ENCODE measurements at regions of chr2 and their contacts with region 1.

Region 1: GRCh38 chr2:237441605-237442274 is 27.8 kb upstream of the COL6A3 start:
- DNase-seq: peak; percentile 60
- H3K4me3 Mint-ChIP-seq: peak overlapping the region; percentile 1
- H3K27ac Mint-ChIP-seq: peak overlapping the region; percentile 81
- H3K4me1 Mint-ChIP-seq: peaks cover 57% of the 10 kb centered on the region
- H3K27me3 Mint-ChIP-seq: no peaks in the 10 kb centered on the region

Region 2: GRCh38 chr2:237408335-237409000 is 33.3 kb before region 1 on chr2:
- CTCF ChIA-PET with region 1: no interaction called
- intact Hi-C with region 1: no loop called
- DNase-seq: no peak
- H3K4me3 Mint-ChIP-seq: no peak overlapping the region
- H3K27ac Mint-ChIP-seq: no peak overlapping the region
- H3K4me1 Mint-ChIP-seq: no peaks in the 10 kb centered on the region
- H3K27me3 Mint-ChIP-seq: no peaks in the 10 kb centered on the region

Region 3: GRCh38 chr2:237421542-237422116 is 20.1 kb before region 1 on chr2:
- CTCF ChIA-PET with region 1: interaction called, 23 read pairs
- intact Hi-C with region 1: no loop called
- DNase-seq: peak; percentile 88
- H3K4me3 Mint-ChIP-seq: peak overlapping the region; percentile 25
- H3K27ac Mint-ChIP-seq: no peak overlapping the region
- H3K4me1 Mint-ChIP-seq: peaks cover 29% of the 10 kb centered on the region
- H3K27me3 Mint-ChIP-seq: peaks cover 11% of the 10 kb centered on the region

Region 4: DNA sequence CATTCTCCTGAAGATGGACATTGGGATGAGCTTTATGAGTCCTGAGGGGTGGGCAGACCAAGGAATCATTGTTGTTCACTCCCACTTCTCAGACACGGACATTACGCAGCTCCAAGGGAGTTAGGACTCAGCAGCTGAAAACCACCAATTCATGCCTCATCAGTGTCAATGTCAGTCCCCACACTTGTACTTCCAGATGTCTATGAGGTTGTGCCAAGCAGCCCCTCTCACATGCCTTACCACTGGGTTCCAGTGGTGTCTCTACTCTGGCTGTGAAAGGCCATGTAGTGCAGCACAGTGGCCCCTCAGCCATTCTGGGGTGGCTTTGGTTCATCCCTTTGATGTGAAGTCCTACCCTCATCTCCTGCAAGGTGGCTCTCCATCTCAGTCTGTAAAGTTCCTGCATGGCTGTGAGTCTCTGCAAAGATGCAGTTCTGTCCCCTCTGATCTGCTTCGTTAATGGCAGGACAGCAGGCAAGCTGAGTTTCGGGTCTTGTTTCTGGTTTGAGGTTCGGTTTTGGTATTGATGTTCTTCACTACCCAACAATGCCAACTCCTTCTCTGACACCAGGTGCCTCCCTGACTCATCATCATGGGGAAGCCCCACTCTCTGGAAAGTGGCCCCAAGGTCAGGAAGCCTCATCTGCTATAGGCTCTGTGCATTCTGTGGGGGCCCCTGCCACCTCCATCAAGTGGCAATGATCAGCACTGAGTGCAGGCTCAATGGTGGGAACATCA is 13.8 kb before region 1 on chr2:
- CTCF ChIA-PET with region 1: interaction called, 16 read pairs
- intact Hi-C with region 1: loop called (anchors 1 kb)
- DNase-seq: peak; percentile 94
- H3K4me3 Mint-ChIP-seq: no peak overlapping the region
- H3K27ac Mint-ChIP-seq: peak overlapping the region; percentile 72
- H3K4me1 Mint-ChIP-seq: peaks cover 80% of the 10 kb centered on the region
- H3K27me3 Mint-ChIP-seq: peaks cover 7% of the 10 kb centered on the region

Region 5: GRCh38 chr2:237558906-237559641 is 117.3 kb after region 1 on chr2:
- CTCF ChIA-PET with region 1: interaction called, 3 read pairs
- intact Hi-C with region 1: loop called (anchors 1 kb)
- DNase-seq: no peak
- H3K4me3 Mint-ChIP-seq: no peak overlapping the region
- H3K27ac Mint-ChIP-seq: no peak overlapping the region
- H3K4me1 Mint-ChIP-seq: peaks cover 13% of the 10 kb centered on the region
- H3K27me3 Mint-ChIP-seq: peaks cover 7% of the 10 kb centered on the region

Region 6: DNA sequence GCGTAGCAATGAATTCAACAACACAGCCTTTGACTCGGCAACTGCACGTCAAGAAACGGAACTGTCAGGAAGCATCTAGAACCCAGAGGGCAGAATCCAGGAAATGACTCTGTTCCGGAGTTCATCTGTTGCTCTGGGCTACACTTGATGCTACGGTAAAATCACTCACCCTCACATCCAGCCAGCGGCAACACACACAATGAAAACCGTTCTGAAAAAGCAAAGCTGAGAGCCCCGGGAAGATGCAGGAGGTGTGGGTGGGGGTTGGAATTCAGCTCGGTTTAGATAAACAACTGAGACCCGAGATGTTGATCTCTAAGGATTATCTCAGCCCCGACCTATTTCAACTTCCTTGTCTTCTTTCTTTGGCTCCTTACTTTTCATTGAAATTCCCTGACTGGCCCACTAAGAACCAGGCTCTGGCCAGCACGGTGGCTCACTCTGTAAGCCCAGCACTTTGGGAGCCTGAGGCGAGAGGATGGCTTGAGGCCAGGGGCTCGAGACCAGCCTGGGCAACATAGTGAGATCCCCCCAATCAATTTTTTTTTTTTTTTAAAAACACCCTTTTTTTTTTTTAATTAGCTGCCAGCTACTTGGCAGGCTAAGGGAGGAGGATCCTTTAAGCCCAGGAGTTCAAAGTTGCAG is 162.1 kb after region 1 on chr2:
- CTCF ChIA-PET with region 1: no interaction called
- intact Hi-C with region 1: loop called (anchors 1 kb)
- DNase-seq: peak; percentile 82
- H3K4me3 Mint-ChIP-seq: peak overlapping the region; percentile 20
- H3K27ac Mint-ChIP-seq: peak overlapping the region; percentile 68
- H3K4me1 Mint-ChIP-seq: peaks cover 18% of the 10 kb centered on the region
- H3K27me3 Mint-ChIP-seq: no peaks in the 10 kb centered on the region

Region 7: DNA sequence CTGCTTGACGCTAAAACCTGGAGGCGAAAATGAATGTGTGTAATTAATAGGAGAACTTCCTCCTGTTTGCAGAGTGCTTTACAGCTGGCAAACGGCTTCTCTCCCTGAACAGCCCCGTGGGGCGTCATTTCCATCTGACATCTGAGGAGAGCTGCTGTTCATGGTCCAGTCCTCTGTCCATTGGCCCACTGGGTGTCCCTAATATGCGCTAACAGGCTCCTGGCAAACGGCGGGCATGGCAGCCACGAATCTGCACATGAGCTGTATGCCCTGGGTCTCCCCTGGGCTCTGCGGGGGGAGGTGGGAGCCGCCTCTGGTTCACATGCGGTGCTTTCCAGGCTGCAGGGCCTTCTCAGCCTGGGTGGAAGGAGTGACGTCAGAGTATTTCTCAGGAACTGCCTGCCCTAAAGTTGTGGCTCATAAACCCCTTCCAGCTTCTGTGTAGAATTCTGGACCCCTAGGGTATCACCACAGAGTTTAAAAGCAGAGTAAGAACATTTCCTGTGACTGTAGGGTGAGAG is 258.8 kb after region 1 on chr2:
- CTCF ChIA-PET with region 1: no interaction called
- intact Hi-C with region 1: loop called (anchors 1 kb)
- DNase-seq: peak; percentile 84
- H3K4me3 Mint-ChIP-seq: peak overlapping the region; percentile 40
- H3K27ac Mint-ChIP-seq: peak overlapping the region; percentile 86
- H3K4me1 Mint-ChIP-seq: peaks cover 95% of the 10 kb centered on the region
- H3K27me3 Mint-ChIP-seq: no peaks in the 10 kb centered on the region

Region 8: GRCh38 chr2:237731663-237732062 is 289.9 kb after region 1 on chr2:
- CTCF ChIA-PET with region 1: no interaction called
- intact Hi-C with region 1: loop called (anchors 1 kb)
- DNase-seq: peak; percentile 66
- H3K4me3 Mint-ChIP-seq: no peak overlapping the region
- H3K27ac Mint-ChIP-seq: peak overlapping the region; percentile 17
- H3K4me1 Mint-ChIP-seq: peaks cover 46% of the 10 kb centered on the region
- H3K27me3 Mint-ChIP-seq: no peaks in the 10 kb centered on the region